Breast epithelium (tissue), 4 donors: ENCODE measurements at regions of chr16 and their contacts with region 1.

Region 1: GRCh38 chr16:49260253-49260652 is 21.4 kb downstream of the CBLN1 start:
- DNase-seq: no peak
- H3K4me3 ChIP-seq: no peak overlapping the region
- H3K27ac ChIP-seq: no peak overlapping the region
- H3K4me1 ChIP-seq: no peaks in the 10 kb centered on the region
- H3K27me3 ChIP-seq: peaks cover 0 to 3% of the 10 kb centered on the region in 2 donors
- CTCF ChIP-seq: no peak
- POLR2A ChIP-seq: no peak

Region 2: DNA sequence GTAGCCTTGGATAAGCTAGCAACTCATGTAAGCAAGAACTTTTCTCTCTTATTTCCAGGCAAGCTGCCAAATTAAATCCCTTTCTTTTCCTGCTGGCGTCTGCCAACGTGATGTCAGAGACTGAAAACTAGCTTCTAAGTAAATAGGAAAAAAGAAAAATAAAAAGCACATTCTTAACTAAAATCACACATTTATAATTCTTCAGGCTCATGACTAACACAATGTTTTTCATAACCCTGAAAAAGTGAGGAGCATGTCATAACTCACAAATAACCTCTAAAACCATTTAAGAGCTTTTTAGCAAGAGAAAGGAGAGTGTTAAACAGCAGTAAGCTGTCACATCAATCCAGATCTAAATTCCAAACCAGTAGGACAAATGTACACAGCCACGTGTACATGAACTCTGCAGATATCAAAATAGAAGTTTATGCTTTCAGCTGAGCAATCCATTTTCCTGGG is 760.3 kb before region 1 on chr16:
- intact Hi-C with region 1: no loop called
- DNase-seq: peak in 1 of 2 donors; percentile 67
- H3K4me3 ChIP-seq: no peak overlapping the region
- H3K27ac ChIP-seq: peak overlapping the region; percentile 74 to 84
- H3K4me1 ChIP-seq: peaks cover 5 to 8% of the 10 kb centered on the region in 2 donors
- H3K27me3 ChIP-seq: no peaks in the 10 kb centered on the region
- CTCF ChIP-seq: no peak
- POLR2A ChIP-seq: no peak

Region 3: DNA sequence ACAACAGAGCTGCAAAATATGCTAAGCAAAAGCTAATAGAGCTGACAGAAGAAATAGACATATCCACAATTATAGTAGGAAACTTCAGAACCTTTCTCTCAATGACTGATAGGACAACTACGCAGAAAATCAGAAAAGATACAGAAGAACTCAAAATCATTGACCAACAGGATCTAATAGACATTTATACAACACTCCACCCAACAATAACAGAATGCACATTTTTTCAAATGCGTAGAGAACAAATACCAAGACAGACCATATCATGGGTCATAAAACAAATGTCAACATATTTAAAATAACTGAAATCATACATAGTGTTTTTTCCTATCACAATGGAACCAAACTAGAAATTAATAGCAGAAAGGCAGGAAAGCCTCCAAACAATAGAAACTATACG is 350.7 kb after region 1 on chr16:
- intact Hi-C with region 1: loop called (anchors 5 kb)
- DNase-seq: no peak
- H3K4me3 ChIP-seq: no peak overlapping the region
- H3K27ac ChIP-seq: no peak overlapping the region
- H3K4me1 ChIP-seq: no peaks in the 10 kb centered on the region
- H3K27me3 ChIP-seq: no peaks in the 10 kb centered on the region
- CTCF ChIP-seq: no peak
- POLR2A ChIP-seq: no peak